ENCODE measurements at regions of chr20 and their contacts with region 1.

Region 1: DNA sequence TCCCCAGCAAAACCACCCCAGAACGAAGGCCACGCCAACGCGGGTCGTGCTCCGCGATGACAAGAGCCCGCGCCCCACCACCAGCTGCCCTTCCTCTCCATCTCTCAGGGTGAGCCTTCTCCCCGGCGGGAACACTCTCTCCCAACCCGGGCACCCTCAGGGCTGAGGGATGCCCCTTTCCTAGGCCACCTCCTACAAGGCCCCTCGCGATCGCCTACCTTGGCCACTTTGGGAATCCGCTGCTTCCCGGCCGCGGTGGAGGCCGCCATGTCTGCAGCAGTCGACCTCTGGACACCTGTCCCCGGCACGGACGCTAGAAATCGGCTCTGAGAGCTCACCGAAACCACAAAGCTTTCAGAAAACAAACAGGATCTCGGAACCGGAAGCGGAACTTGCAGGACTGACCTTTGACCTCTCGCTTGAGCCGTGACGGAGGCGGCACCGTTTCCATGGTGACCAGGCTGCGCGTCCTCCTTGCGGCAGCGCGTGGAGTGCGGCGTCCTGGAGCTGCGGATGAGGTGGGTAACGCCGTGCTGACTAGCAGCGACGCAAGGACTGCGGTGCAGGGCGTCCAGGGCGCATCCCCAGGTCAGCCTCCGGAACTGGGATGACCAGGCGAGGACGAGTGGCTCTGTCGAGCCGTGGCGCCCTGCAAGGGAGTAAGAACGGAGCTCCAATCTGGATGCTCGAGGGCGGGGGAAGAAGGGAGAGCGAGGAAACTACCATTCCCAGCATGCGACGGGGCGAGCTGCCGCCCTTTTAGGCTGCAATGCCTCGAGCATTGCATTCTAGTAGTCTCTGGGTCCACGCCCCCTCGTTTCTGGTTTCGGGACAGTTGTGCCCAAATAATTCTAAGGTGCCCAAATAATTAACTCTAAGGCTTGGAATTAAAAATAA is at the starts of genes CFAP61 and CRNKL1:
- DNase-seq: peak; percentile 95
- CTCF ChIP-seq: no peak

Region 2: GRCh38 chr20:20017001-20017843 is 35.1 kb before region 1 on chr20 and contains the start of gene NAA20:
- CTCF ChIA-PET with region 1: interaction called, 17 read pairs
- POLR2A ChIA-PET with region 1: no interaction called
- DNase-seq: peak; percentile 96
- CTCF ChIP-seq: peak; percentile 80

Region 3: DNA sequence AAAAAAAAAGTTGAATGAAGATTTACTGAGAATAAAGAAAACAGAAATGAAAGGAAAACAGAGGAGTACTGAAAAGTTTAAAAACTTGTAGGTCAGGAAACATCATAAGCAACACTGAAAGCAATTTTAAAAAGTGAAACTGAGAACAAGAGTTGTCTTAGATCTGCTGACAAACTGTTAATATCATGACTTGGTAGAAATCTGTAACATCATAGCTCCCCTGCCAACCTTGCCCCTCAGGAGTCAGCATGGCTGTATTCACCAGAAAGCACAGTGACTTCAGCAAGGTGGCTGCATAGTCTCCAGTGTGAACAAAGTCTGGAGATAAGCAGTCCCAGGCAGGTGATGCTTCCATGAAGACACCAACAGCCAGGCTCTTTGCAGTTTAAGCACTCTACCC is 29.8 kb before region 1 on chr20:
- CTCF ChIA-PET with region 1: interaction called, 17 read pairs
- POLR2A ChIA-PET with region 1: no interaction called
- DNase-seq: peak; percentile 48
- CTCF ChIP-seq: no peak

Region 4: DNA sequence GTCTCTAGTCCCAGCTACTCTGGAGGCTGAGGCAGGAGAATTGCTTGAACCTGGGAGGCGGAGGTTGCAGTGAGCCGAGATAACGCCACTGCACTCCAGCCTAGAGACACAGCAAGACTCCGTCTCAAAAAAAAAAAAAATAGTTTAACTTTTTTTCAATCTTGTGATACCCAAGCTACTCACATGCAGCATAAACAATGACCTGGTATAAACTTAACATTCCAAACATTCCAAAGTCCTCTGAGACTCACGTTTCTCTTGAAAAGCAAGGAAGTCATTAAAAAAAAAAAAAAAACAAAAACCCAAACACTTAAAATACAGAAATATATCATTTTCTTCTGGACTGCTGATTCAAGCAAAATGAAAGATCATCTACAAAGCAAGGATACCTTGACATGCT is 14.4 kb before region 1 on chr20:
- CTCF ChIA-PET with region 1: interaction called, 10 read pairs
- POLR2A ChIA-PET with region 1: no interaction called
- DNase-seq: no peak
- CTCF ChIP-seq: no peak